IMR-90 (cell line): ENCODE measurements at regions of chr10 and their contacts with region 1.

Region 1: DNA sequence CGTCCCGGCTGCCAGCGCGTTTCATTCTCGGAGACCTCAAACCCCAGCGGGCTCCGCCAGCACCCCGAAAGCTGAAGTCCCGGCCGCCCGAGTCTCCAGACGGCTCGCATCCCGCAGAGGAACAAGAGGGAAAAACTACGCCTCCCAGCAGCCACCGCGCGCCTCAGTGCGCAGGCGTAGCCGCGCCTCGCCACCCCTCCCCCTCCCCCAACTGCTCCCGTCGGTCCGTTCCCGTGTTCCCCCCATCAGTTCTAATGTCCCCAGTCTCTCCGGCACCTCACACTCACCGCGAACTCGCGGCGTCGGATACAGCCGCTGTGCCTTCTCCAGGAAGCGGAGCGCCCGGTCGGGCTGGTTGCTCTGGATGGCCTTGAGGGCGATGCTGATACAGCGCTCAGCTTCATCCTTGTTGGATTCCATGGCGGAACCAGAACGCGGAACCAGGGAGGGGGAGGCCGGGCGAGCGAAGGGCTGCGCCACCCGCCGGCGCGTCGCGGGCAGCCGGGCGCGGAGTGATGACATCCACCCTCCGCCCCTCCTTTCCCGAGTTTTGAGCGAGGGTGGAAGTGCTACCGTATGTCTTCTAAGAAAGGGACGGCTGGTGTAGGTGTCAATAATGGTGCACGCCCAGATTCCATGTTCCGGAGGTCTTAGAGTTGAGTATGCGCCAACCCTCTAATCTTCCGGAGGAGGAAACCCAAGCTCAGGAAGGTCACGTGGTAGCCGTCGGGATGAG is at the start of gene DNAJB12:
- DNase-seq: peak; percentile 95
- ATAC-seq: peak; percentile 89
- H3K4me3 ChIP-seq: peak within 1 kb of the TSS; percentile 82
- H3K27ac ChIP-seq: peak within 1 kb of the TSS; percentile 95
- H3K4me1 ChIP-seq: peaks cover 6% of the 10 kb centered on the region
- H3K27me3 ChIP-seq: no peaks in the 10 kb centered on the region
- CTCF ChIP-seq: no peak
- POLR2A ChIP-seq: peak; percentile 92
- RAD21 ChIP-seq: no peak
- total RNA-seq, gene DNAJB12: 18.3 and 19.2 TPM in 2 replicates

Region 2: DNA sequence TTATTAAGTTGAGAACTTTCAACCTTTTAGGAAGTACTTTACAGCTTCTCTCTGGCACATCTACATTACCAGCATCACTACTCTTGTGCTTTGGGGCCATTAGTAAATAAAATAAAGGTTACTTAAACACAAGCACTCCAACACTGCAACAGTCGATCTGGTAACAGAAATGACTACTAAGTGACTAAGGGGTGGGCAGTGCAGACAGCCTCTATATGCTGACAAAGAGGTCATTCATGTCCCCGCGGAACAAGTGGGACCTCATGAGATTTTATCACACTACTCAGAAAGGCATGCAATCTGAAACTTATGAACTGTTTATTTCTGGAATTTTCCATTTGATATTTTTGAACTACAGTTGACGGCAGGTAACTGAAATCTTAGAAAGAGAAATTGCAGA is 111.4 kb after region 1 on chr10:
- CTCF ChIA-PET with region 1: no interaction called
- POLR2A ChIA-PET with region 1: no interaction called
- dilution Hi-C with region 1: no loop called
- in situ Hi-C with region 1: no loop called
- intact Hi-C with region 1: no loop called
- DNase-seq: peak; percentile 62
- ATAC-seq: peak; percentile 66
- H3K4me3 ChIP-seq: no peak overlapping the region
- H3K27ac ChIP-seq: no peak overlapping the region
- H3K4me1 ChIP-seq: no peaks in the 10 kb centered on the region
- H3K27me3 ChIP-seq: no peaks in the 10 kb centered on the region
- CTCF ChIP-seq: no peak
- POLR2A ChIP-seq: no peak
- RAD21 ChIP-seq: no peak

Region 3: DNA sequence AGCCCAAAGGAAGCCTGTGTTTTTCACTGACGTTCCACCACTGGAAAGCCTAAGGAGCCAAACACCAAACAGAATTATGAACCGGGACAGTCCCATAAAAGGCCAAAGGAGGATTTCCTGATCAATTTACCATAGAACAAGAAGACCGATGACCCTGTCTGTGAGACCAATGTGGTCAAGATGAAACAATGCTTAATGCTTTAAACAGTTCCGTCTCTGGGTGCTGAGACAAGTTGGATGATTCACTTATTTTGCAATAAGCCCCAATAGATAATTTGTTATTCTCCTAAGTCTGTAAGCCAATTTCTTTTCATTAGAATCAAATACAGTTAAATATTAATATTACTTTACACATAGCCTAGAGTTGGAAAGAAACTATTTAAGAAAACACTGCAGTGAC is 136.3 kb after region 1 on chr10:
- CTCF ChIA-PET with region 1: no interaction called
- POLR2A ChIA-PET with region 1: interaction called, 11 read pairs
- dilution Hi-C with region 1: no loop called
- in situ Hi-C with region 1: no loop called
- intact Hi-C with region 1: no loop called
- DNase-seq: peak; percentile 73
- ATAC-seq: peak; percentile 57
- H3K4me3 ChIP-seq: no peak overlapping the region
- H3K27ac ChIP-seq: peak overlapping the region; percentile 1; the same call in 1 of the 2 replicates
- H3K4me1 ChIP-seq: peaks cover 5% of the 10 kb centered on the region
- H3K27me3 ChIP-seq: no peaks in the 10 kb centered on the region
- CTCF ChIP-seq: no peak
- POLR2A ChIP-seq: no peak
- RAD21 ChIP-seq: no peak